Astrocyte of the cerebellum (primary cell): ENCODE measurements at regions of chr11 and their contacts with region 1.

Region 1: GRCh38 chr11:92954003-92954402 is 15.4 kb upstream of the MTNR1B start:
- DNase-seq: no peak
- H3K4me3 ChIP-seq: no peak overlapping the region
- CTCF ChIP-seq: no peak

Region 2: GRCh38 chr11:92911478-92911877 is 42.5 kb before region 1 on chr11:
- in situ Hi-C with region 1: no loop called
- DNase-seq: no peak
- H3K4me3 ChIP-seq: no peak overlapping the region
- CTCF ChIP-seq: no peak

Region 3: GRCh38 chr11:93000511-93001476 is 46.8 kb after region 1 on chr11:
- in situ Hi-C with region 1: no loop called
- DNase-seq: no peak
- H3K4me3 ChIP-seq: no peak overlapping the region
- CTCF ChIP-seq: no peak

Region 4: GRCh38 chr11:93160808-93161207 is 206.8 kb after region 1 on chr11:
- in situ Hi-C with region 1: loop called (anchors 5 kb)
- DNase-seq: no peak
- H3K4me3 ChIP-seq: no peak overlapping the region
- CTCF ChIP-seq: no peak